ENCODE measurements at regions of chr20 and their contacts with region 1.

Region 1: GRCh38 chr20:48828022-48828743 is 384 bp upstream of the PREX1 start:
- DNase-seq: peak; percentile 50 to 93 (median 79)
- ATAC-seq: peak; percentile 48
- H3K4me3 ChIP-seq: peak overlapping the region; percentile 38
- H3K4me3 Mint-ChIP-seq: peak overlapping the region; percentile 92
- H3K27ac ChIP-seq: peak overlapping the region in 1 of 2 donors; percentile 24
- H3K27ac Mint-ChIP-seq: peak overlapping the region; percentile 84
- H3K4me1 ChIP-seq: peaks cover 32% of the 10 kb centered on the region
- H3K4me1 Mint-ChIP-seq: peaks cover 40% of the 10 kb centered on the region
- H3K27me3 ChIP-seq: no peaks in the 10 kb centered on the region
- H3K27me3 Mint-ChIP-seq: peaks cover 10% of the 10 kb centered on the region
- CTCF ChIP-seq: no peak

Region 2: DNA sequence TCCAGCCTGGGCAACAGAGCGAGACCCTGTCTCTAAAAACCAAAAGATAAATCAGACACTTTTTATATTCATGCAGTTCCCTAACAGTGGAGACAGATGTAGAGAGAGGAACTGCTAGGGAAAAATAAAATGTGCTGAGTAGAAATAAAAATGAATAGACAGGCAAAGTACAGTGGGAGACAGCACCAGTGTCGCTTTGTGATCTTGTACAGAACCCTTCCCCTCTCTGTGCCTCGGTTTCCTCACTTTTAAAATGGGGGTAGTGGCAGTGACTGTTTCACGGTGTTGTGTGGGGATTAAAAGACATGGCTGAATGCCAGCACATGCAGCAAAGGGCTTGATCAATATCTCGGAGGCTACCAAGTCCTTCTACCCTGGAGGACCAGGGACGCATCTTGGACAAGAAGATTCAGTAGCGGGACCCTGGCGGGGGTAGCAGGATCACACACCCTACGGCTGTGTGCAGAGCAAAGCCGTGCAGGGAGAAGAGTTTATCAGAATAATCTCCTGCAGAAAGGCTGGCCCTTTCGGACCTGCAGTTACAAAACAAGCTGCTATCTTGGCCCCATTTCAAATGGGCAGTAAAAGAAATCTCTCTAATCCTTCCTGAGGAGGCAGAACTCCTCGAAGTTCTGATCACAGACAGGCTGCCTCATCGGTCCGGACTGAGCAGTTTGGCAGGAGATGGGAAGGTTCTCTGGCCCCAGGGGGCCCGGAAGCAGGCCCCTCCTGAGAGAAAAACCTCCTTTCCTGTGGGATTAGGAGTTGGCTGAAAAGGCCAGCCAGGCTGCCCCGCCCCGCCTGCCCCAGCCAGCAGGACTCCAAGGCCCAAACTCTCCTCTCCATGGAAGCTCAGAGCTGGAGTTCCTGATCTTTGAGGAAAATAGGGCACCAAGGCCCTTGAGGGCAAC is 142.1 kb before region 1 on chr20:
- CTCF ChIA-PET with region 1: no interaction called
- POLR2A ChIA-PET with region 1: no interaction called
- intact Hi-C with region 1: no loop called
- DNase-seq: no peak
- ATAC-seq: no peak
- H3K4me3 ChIP-seq: no peak overlapping the region
- H3K4me3 Mint-ChIP-seq: no peak overlapping the region
- H3K27ac ChIP-seq: no peak overlapping the region
- H3K27ac Mint-ChIP-seq: no peak overlapping the region
- H3K4me1 ChIP-seq: peaks cover 13% of the 10 kb centered on the region
- H3K4me1 Mint-ChIP-seq: no peaks in the 10 kb centered on the region
- H3K27me3 ChIP-seq: no peaks in the 10 kb centered on the region
- H3K27me3 Mint-ChIP-seq: no peaks in the 10 kb centered on the region
- CTCF ChIP-seq: no peak

Region 3: GRCh38 chr20:48718857-48719578 is 109.2 kb before region 1 on chr20:
- CTCF ChIA-PET with region 1: no interaction called
- POLR2A ChIA-PET with region 1: no interaction called
- intact Hi-C with region 1: loop called in 1 of 2 experiments (anchors 5 kb)
- DNase-seq: peak in 10 of 14 experiments; percentile 7 to 73 (median 31)
- ATAC-seq: peak; percentile 54
- H3K4me3 ChIP-seq: no peak overlapping the region
- H3K4me3 Mint-ChIP-seq: peak overlapping the region; percentile 3
- H3K27ac ChIP-seq: peak overlapping the region in 1 of 2 donors; percentile 27
- H3K27ac Mint-ChIP-seq: peak overlapping the region; percentile 74
- H3K4me1 ChIP-seq: peaks cover 86% of the 10 kb centered on the region
- H3K4me1 Mint-ChIP-seq: peaks cover 84% of the 10 kb centered on the region
- H3K27me3 ChIP-seq: no peaks in the 10 kb centered on the region
- H3K27me3 Mint-ChIP-seq: no peaks in the 10 kb centered on the region
- CTCF ChIP-seq: no peak

Region 4: DNA sequence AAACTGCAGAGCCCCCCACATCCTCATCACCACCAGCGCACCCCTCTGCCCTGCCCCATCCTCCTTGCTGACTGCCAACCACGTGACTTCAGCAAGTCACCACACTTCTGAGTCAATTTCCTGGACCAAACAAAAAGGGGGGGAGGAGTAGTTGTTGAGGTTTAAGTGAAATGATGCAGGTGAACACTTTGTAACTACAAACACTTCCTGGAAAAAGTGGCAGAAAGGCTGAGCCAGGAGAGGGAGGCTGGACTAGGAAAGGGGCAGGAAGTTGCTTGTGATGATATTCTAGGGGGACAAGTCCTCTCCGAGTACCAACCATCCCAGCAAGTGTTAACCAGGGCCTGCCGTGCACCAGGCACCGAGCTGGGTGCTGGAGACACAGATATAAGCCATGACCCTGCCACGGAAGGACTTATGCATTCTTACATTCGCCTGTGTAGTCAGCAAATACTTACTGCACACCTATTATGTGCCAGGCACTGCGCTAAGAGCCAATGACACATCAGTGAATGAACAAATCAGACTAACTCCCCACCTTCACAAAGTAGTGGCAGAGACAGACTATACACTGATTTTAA is 67.7 kb before region 1 on chr20:
- CTCF ChIA-PET with region 1: interaction called, 3 read pairs
- POLR2A ChIA-PET with region 1: no interaction called
- intact Hi-C with region 1: loop called in 1 of 2 experiments (anchors 5 kb)
- DNase-seq: peak; percentile 39 to 95 (median 68)
- ATAC-seq: peak; percentile 82
- H3K4me3 ChIP-seq: peak overlapping the region; percentile 18
- H3K4me3 Mint-ChIP-seq: peak overlapping the region; percentile 46
- H3K27ac ChIP-seq: peak overlapping the region; percentile 68 to 86
- H3K27ac Mint-ChIP-seq: peak overlapping the region; percentile 92
- H3K4me1 ChIP-seq: peaks cover 82% of the 10 kb centered on the region
- H3K4me1 Mint-ChIP-seq: peaks cover 74% of the 10 kb centered on the region
- H3K27me3 ChIP-seq: no peaks in the 10 kb centered on the region
- H3K27me3 Mint-ChIP-seq: no peaks in the 10 kb centered on the region
- CTCF ChIP-seq: no peak

Region 5: DNA sequence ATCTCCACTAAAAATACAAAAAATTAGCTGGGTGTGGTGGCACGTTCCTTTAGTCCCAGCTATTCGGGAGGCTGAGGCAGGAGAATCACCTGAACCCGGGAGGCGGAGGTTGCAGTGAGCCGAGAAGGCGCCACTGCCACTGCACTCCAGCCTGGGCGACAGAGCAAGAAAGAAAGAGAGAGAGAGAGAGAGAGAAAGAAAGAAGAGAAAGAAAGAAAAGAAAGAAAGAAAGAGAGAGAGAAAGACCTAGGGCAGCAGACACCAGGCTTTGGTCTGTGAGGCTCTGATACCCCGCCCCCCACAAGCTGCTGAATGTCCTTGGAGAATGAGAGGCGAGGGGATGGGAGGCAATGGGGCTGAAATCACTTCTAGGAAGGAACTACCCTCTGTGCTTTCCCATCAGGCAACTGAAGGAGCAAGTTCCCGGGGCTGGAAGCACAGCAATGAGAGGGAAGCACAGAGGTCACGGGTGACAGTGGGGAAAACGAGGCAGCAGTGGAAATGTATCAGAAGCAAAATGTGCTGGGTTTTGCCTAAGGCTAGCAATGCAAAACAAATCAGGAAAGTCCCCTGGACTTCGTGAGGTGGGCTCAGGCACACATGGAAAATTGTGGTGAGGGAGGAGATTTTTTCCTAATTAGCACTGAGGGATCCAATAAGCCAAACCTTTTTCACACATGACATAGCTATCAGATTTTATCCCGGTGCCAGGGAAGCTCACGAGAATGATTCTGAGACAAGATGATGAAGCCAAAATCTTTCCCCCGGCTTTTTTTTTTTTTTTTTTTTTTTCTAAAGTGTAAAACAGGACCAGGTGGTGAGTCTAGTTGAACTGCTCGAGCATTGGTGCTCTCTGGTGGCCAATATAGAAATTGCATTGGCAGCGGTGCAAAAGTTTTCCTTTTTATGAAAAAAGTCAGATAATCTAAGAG is 76.4 kb after region 1 on chr20:
- CTCF ChIA-PET with region 1: interaction called, 5 read pairs
- POLR2A ChIA-PET with region 1: interaction called, 3 read pairs
- intact Hi-C with region 1: loop called in 1 of 2 experiments (anchors 10 kb)
- DNase-seq: peak; percentile 42 to 80 (median 59)
- ATAC-seq: peak; percentile 73
- H3K4me3 ChIP-seq: no peak overlapping the region
- H3K4me3 Mint-ChIP-seq: no peak overlapping the region
- H3K27ac ChIP-seq: no peak overlapping the region
- H3K27ac Mint-ChIP-seq: no peak overlapping the region
- H3K4me1 ChIP-seq: peaks cover 6% of the 10 kb centered on the region
- H3K4me1 Mint-ChIP-seq: peaks cover 4% of the 10 kb centered on the region
- H3K27me3 ChIP-seq: no peaks in the 10 kb centered on the region
- H3K27me3 Mint-ChIP-seq: no peaks in the 10 kb centered on the region
- CTCF ChIP-seq: peak; percentile 89

Region 6: GRCh38 chr20:48962976-48963771 is 135.0 kb after region 1 on chr20:
- CTCF ChIA-PET with region 1: no interaction called
- POLR2A ChIA-PET with region 1: no interaction called
- intact Hi-C with region 1: no loop called
- DNase-seq: no peak
- ATAC-seq: no peak
- H3K4me3 ChIP-seq: no peak overlapping the region
- H3K4me3 Mint-ChIP-seq: no peak overlapping the region
- H3K27ac ChIP-seq: no peak overlapping the region
- H3K27ac Mint-ChIP-seq: no peak overlapping the region
- H3K4me1 ChIP-seq: no peaks in the 10 kb centered on the region
- H3K4me1 Mint-ChIP-seq: no peaks in the 10 kb centered on the region
- H3K27me3 ChIP-seq: no peaks in the 10 kb centered on the region
- H3K27me3 Mint-ChIP-seq: no peaks in the 10 kb centered on the region
- CTCF ChIP-seq: no peak

Region 7: DNA sequence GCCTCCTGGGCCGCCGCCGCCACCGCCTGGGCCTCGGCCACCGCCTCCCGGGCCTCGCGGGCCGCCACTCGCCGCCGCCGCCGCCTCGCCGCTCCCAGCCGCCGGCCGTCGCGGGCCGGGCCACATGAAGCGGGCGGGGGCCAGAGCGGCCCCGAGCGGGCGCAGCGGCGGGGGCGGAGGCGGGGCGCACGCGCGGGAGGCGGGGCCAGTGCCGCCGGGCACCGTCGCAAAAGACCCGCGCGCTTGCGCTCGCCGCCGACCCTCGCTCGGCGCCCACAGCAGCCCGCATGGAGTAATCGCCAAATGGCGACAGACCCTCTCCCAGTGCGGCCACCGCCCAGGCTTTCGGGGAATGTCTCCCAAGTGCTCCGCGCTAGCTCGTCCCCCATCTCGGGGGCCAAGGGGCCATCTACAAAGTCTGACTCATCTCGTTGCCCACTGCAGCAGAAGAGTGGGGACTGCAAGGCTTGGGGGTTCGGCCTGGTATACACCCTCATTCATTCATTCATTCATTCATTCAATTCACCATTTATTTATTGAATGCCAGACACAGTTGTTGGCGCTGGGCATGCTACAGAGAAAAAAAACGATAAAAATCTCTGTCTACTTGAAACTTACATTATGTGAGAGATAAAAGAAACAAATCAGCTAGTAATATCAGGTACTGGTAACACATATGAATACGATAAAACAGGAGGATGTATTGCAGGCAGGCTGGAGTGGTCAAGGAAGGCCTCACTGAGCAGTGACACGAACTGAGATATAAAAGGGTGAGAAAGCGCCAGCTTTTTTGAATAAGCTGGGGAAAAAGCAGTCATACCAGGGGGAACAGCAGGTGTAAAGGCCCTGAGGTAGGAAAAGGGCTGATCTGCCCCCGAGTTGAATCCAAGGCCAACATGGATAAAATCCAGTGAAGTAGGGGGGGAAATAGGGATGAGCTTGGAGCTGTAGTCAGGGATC is 885.9 kb after region 1 on chr20 and contains the start of gene B4GALT5:
- CTCF ChIA-PET with region 1: no interaction called
- POLR2A ChIA-PET with region 1: no interaction called
- intact Hi-C with region 1: loop called in 1 of 2 experiments (anchors 5 kb)
- DNase-seq: peak; percentile 17 to 84 (median 50)
- ATAC-seq: peak; percentile 79
- H3K4me3 ChIP-seq: peak within 1 kb of the TSS; percentile 89
- H3K4me3 Mint-ChIP-seq: peak within 1 kb of the TSS; percentile 93
- H3K27ac ChIP-seq: peak within 1 kb of the TSS in 1 of 2 donors; percentile 40
- H3K27ac Mint-ChIP-seq: peak within 1 kb of the TSS; percentile 63
- H3K4me1 ChIP-seq: peaks cover 17% of the 10 kb centered on the region
- H3K4me1 Mint-ChIP-seq: peaks cover 35% of the 10 kb centered on the region
- H3K27me3 ChIP-seq: no peaks in the 10 kb centered on the region
- H3K27me3 Mint-ChIP-seq: no peaks in the 10 kb centered on the region
- CTCF ChIP-seq: no peak
- total RNA-seq, gene B4GALT5: 3.1 to 3.2 TPM

Measured in CD4-positive, alpha-beta T cell (primary cell).